Dendritic cell treated with granulocyte-macrophage colony-stimulating factor and Interleukin-4, amounts not matched to agents 40 ng/mL and 50 ng/mL, for 4 days (primary cell): ENCODE measurements at regions of chr9 and their contacts with region 1.

Region 1: DNA sequence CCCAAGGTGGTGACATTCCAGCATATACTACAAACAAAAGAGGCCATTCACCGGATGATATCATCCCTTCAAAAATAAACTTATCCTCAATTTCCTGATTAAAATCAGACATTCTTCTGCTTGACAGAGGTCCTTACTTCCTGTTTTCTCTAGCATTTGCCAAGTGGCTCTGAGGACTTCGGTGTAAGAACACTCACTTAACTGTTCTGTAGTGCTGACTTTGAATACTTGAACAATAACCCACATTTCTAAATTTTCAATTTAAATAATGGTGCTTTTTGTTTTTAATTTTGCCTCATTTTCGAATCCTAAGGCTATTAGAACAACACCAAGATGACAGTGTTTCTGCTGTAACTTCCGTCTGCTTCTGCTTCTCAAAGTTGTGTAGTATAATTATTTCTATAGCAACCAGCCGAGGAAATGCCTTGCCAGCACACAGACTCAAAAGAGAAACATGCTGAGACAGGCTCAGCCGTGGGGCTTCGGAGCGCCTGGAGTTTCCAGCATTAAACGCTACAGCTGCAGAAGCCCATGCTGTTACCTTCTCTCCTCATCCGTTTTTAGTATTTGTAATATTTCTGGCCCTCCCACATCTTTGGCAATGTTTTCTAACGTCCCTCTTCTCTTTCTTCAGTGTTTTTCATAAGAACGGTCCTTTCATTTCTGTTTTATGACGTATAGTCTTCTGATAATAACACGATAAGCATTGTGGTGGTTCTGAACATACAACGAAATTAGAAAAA is 19.5 kb upstream of the ANXA1 start:
- H3K4me3 Mint-ChIP-seq: peak overlapping the region; percentile 80
- H3K27ac Mint-ChIP-seq: peak overlapping the region; percentile 96
- H3K4me1 Mint-ChIP-seq: peaks cover 26% of the 10 kb centered on the region
- H3K27me3 Mint-ChIP-seq: no peaks in the 10 kb centered on the region

Region 2: GRCh38 chr9:71638627-71639026 is 1493.6 kb before region 1 on chr9:
- intact Hi-C with region 1: loop called (anchors 10 kb)
- H3K4me3 Mint-ChIP-seq: peak overlapping the region; percentile 18
- H3K27ac Mint-ChIP-seq: peak overlapping the region; percentile 92
- H3K4me1 Mint-ChIP-seq: peaks cover 32% of the 10 kb centered on the region
- H3K27me3 Mint-ChIP-seq: no peaks in the 10 kb centered on the region

Region 3: GRCh38 chr9:73149371-73150067 is 17.3 kb after region 1 on chr9:
- intact Hi-C with region 1: loop called (anchors 1 kb)
- H3K4me3 Mint-ChIP-seq: peak overlapping the region; percentile 31
- H3K27ac Mint-ChIP-seq: peak overlapping the region; percentile 87
- H3K4me1 Mint-ChIP-seq: peaks cover 41% of the 10 kb centered on the region
- H3K27me3 Mint-ChIP-seq: no peaks in the 10 kb centered on the region